CD4-positive, alpha-beta memory T cell (primary cell): ENCODE measurements at regions of chr5 and their contacts with region 1.

Region 1: DNA sequence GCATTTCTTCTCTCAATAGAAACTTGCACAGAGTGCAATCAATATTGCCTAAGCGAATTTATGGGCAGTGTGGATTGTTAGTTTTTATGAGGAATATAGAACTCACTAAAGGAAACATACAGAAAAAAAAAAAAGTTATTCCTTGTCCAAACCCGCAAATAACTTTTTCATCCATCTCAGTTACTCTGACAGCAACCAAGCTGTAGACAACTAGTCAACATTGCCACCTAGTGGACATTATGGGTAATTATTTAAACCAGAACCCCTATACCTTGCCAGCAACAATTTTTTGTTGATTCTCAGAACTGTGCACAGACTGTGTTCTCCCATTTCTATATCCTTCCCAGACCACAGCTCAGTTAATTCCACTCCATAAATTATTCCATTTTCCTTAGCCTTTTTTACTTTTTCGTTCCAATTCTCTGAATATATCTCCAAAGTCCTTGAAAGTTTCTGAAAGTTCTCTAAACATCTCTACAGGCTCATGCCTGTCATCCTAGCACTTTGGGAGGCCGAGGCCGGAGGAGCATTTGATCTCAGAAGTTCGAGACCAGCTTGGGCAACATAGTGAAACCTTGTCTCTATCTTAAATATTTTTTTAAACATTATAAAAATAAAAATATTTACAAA is 2.6 kb upstream of the AFAP1L1 start:
- DNase-seq: peak in 4 of 5 donors; percentile 42 to 62 (median 59)
- H3K4me3 ChIP-seq: no peak overlapping the region
- H3K4me3 Mint-ChIP-seq: peak overlapping the region in 1 of 8 donors; percentile 33
- H3K27ac ChIP-seq: no peak overlapping the region
- H3K27ac Mint-ChIP-seq: peak overlapping the region in 1 of 7 donors; percentile 69
- H3K4me1 ChIP-seq: peaks cover 4% of the 10 kb centered on the region
- H3K4me1 Mint-ChIP-seq: peaks cover 8 to 15% (median 11%) of the 10 kb centered on the region in 4 donors
- H3K27me3 ChIP-seq: peaks cover 22% of the 10 kb centered on the region
- H3K27me3 Mint-ChIP-seq: peaks cover 24 to 28% of the 10 kb centered on the region in 2 donors

Region 2: DNA sequence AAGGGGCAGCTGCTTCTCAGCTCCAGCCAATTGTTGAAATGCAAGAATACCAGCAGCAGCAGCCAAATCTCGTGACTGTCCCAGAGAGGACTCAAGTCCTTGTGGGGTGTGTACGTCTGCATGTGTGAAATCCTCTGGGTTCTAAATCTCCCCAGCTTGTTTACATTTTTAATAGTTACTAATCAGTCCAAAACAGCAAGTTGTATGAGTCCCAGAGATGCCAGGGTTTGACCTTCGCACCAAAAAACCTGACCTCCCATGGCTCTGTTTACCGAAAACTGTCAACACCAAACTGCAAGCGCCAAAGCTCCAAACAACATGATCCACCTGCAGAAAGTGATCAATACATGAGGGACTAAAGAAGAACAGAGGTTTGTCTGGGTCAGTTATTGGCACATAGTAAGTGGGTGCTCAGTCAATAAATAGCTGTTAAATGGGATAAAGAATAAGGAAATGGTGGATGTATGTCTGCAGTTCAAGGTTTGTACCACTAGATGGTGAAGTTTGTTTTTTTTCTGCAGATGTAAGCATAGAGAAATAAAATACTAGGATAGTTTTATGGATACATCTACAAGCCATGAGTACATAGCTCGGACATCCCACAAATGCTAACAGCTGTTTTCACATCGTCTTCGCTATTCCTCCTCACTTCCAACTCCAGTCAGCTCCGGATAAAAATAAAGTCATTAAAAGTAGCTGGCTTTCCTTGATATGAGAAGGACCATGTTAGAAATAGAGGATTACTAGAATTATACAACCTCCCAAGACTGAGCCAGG is 527.9 kb before region 1 on chr5:
- CTCF ChIA-PET with region 1: interaction called, 19 read pairs
- POLR2A ChIA-PET with region 1: no interaction called
- intact Hi-C with region 1: no loop called
- DNase-seq: peak in 4 of 5 donors; percentile 28 to 35 (median 32)
- H3K4me3 ChIP-seq: no peak overlapping the region
- H3K4me3 Mint-ChIP-seq: no peak overlapping the region
- H3K27ac ChIP-seq: no peak overlapping the region
- H3K27ac Mint-ChIP-seq: no peak overlapping the region
- H3K4me1 ChIP-seq: no peaks in the 10 kb centered on the region
- H3K4me1 Mint-ChIP-seq: no peaks in the 10 kb centered on the region
- H3K27me3 ChIP-seq: no peaks in the 10 kb centered on the region
- H3K27me3 Mint-ChIP-seq: peaks cover 4 to 15% of the 10 kb centered on the region in 2 donors

Region 3: GRCh38 chr5:149135536-149136201 is 133.4 kb before region 1 on chr5:
- CTCF ChIA-PET with region 1: interaction called, 190 read pairs
- POLR2A ChIA-PET with region 1: no interaction called
- intact Hi-C with region 1: no loop called
- DNase-seq: no peak
- H3K4me3 ChIP-seq: no peak overlapping the region
- H3K4me3 Mint-ChIP-seq: no peak overlapping the region
- H3K27ac ChIP-seq: no peak overlapping the region
- H3K27ac Mint-ChIP-seq: no peak overlapping the region
- H3K4me1 ChIP-seq: no peaks in the 10 kb centered on the region
- H3K4me1 Mint-ChIP-seq: peaks cover 0 to under 1% (median 0%) of the 10 kb centered on the region in 4 donors
- H3K27me3 ChIP-seq: no peaks in the 10 kb centered on the region
- H3K27me3 Mint-ChIP-seq: peaks cover 21 to 27% of the 10 kb centered on the region in 2 donors

Region 4: DNA sequence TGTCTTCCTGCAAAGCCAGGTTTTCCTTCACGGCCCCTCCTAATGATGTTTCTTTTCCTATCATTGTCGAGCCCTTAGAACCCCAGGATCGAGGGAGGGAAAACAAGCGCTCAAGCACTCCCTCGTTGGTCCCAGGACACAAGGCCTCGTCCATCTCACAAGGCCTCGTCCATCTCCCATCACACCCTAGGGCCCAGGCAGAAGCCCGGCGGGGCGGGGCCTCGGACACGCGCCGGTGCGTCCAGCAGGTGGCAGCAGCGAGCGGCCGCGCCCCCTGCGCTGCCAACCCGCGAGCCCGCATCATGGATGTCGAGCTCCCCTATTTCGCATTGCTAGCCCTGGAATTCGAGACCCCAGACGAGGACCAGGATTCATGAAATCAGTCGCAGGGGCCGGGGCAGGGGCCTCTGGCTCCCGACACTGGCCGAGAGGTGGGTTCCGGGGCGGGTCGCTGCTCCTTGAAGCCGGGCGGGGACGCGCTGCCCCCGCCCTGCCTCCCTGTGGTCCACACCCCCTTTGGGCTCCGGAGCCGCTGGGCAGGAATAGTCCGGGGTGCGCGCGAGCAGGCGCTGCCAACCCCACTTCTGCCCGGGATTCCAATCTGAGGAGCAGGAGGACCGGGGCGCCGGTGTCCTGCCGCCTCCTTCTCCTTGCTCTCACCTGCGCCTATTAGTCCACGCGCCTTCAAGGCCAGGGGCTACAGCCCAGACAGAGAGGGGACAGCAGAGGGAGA is 127.7 kb before region 1 on chr5 and contains the start of gene ABLIM3:
- CTCF ChIA-PET with region 1: interaction called, 190 read pairs
- POLR2A ChIA-PET with region 1: interaction called, 7 read pairs
- intact Hi-C with region 1: loop called (anchors 1 kb)
- DNase-seq: peak; percentile 58 to 79 (median 68)
- H3K4me3 ChIP-seq: peak within 1 kb of the TSS in 1 of 2 donors; percentile 58
- H3K4me3 Mint-ChIP-seq: peak within 1 kb of the TSS; percentile 33 to 76 (median 56)
- H3K27ac ChIP-seq: no peak within 1 kb of the TSS
- H3K27ac Mint-ChIP-seq: peak within 1 kb of the TSS in 1 of 7 donors; percentile 36
- H3K4me1 ChIP-seq: peaks cover 10% of the 10 kb centered on the region
- H3K4me1 Mint-ChIP-seq: peaks cover 0 to 5% (median under 1%) of the 10 kb centered on the region in 4 donors
- H3K27me3 ChIP-seq: no peaks in the 10 kb centered on the region
- H3K27me3 Mint-ChIP-seq: peaks cover 4 to 18% of the 10 kb centered on the region in 2 donors
- total RNA-seq, gene ABLIM3: not detected

Region 5: DNA sequence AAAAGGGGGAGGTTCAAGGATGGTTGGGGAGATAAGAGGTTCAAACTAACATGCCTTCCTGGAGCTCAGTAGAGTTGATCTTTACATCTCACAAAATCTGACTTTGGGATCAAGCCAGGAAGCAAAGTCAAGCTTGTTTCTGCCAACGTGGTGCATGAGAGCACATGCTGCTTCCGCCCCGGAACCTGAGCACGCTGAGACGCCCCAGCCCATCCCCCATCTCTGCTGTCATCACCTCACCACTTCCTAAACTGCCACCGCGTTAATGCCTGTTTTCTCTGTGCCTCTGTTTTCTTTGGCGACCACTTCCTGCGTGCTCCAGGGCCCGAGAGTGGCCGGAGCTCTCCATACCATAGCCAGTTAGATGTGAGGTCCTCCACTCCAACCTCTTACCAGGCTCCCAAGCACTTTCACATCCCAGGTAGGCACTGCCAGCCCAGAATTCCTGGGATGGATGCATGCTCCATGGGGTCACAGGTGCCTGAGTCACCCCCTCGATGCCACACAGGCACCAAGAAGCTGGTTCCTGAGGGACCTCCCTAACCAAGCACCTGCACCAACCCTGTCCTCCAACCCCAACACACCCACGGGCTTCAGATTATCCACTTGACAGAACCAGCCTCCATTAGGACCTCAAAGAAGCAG is 28.6 kb before region 1 on chr5:
- CTCF ChIA-PET with region 1: interaction called, 21 read pairs
- POLR2A ChIA-PET with region 1: interaction called, 4 read pairs
- intact Hi-C with region 1: loop called (anchors 1 kb)
- DNase-seq: peak; percentile 78 to 91 (median 88)
- H3K4me3 ChIP-seq: peak overlapping the region; percentile 26 to 34
- H3K4me3 Mint-ChIP-seq: peak overlapping the region; percentile 25 to 80 (median 64)
- H3K27ac ChIP-seq: peak overlapping the region; percentile 49
- H3K27ac Mint-ChIP-seq: peak overlapping the region; percentile 81 to 95 (median 89)
- H3K4me1 ChIP-seq: peaks cover 35% of the 10 kb centered on the region
- H3K4me1 Mint-ChIP-seq: peaks cover 29 to 57% (median 37%) of the 10 kb centered on the region in 4 donors
- H3K27me3 ChIP-seq: no peaks in the 10 kb centered on the region
- H3K27me3 Mint-ChIP-seq: no peaks in the 10 kb centered on the region

Region 6: DNA sequence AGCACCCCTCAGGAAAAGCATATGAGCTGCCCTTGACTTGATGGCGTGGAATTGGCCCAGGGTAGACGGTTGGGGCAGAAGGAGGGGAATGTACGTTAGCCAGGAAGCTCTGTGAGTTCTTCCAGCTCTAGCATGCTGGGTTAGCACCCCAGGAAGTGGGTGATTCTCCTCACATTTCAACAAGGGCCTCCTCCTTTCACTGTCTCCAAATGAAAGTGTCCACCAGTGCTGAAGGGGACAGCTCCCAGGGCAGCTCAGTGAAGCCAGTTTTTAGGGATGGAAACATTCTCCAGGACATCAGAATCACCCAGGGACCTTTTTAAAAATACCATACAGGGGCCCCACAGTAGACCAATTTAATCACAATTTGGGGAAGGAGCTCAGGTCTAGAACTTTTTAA is 14.5 kb before region 1 on chr5:
- CTCF ChIA-PET with region 1: interaction called, 14 read pairs
- POLR2A ChIA-PET with region 1: no interaction called
- intact Hi-C with region 1: no loop called
- DNase-seq: no peak
- H3K4me3 ChIP-seq: no peak overlapping the region
- H3K4me3 Mint-ChIP-seq: no peak overlapping the region
- H3K27ac ChIP-seq: no peak overlapping the region
- H3K27ac Mint-ChIP-seq: no peak overlapping the region
- H3K4me1 ChIP-seq: no peaks in the 10 kb centered on the region
- H3K4me1 Mint-ChIP-seq: peaks cover 0 to 3% (median under 1%) of the 10 kb centered on the region in 4 donors
- H3K27me3 ChIP-seq: no peaks in the 10 kb centered on the region
- H3K27me3 Mint-ChIP-seq: peaks cover 1 to 4% of the 10 kb centered on the region in 2 donors

Region 7: GRCh38 chr5:149392718-149393117 is 123.7 kb after region 1 on chr5:
- CTCF ChIA-PET with region 1: no interaction called
- POLR2A ChIA-PET with region 1: no interaction called
- intact Hi-C with region 1: no loop called
- DNase-seq: no peak
- H3K4me3 ChIP-seq: no peak overlapping the region
- H3K4me3 Mint-ChIP-seq: no peak overlapping the region
- H3K27ac ChIP-seq: no peak overlapping the region
- H3K27ac Mint-ChIP-seq: no peak overlapping the region
- H3K4me1 ChIP-seq: no peaks in the 10 kb centered on the region
- H3K4me1 Mint-ChIP-seq: no peaks in the 10 kb centered on the region
- H3K27me3 ChIP-seq: no peaks in the 10 kb centered on the region
- H3K27me3 Mint-ChIP-seq: no peaks in the 10 kb centered on the region

Region 8: DNA sequence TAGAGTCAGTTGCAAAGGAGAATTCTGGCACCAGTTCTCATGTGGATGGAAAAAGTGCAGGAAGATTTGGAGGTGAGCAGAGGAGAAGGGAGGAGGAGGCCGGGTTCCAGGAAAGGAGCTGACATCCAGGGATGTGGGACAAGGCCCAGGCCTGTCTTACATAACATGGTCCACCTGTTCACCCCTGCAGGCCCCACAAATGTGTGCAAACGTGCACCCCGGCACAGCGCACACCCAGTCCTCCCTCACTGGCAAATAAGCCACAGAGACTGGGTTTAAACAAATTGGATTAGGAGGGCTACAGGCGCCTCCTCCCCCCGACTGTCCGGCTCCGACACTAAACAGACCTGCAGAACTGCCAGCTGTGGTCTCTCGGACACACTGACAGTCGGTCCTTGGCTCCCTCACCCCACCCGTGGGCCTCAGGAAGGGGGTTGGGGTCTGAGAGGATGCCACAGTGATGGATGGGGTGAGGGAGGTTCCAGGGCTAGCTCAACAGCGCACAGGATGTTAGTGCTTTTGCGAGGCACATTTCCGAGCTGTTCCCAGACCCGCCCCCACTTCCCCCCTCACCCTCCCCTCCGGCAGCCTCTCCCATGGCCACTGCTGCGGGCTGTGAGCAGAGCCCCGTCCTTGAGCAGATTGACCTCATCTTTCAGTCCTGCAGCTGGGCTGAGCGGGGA is 153.5 kb after region 1 on chr5:
- CTCF ChIA-PET with region 1: no interaction called
- POLR2A ChIA-PET with region 1: no interaction called
- intact Hi-C with region 1: no loop called
- DNase-seq: no peak
- H3K4me3 ChIP-seq: no peak overlapping the region
- H3K4me3 Mint-ChIP-seq: no peak overlapping the region
- H3K27ac ChIP-seq: no peak overlapping the region
- H3K27ac Mint-ChIP-seq: peak overlapping the region in 1 of 7 donors; percentile 9
- H3K4me1 ChIP-seq: no peaks in the 10 kb centered on the region
- H3K4me1 Mint-ChIP-seq: peaks cover 0 to 4% (median under 1%) of the 10 kb centered on the region in 4 donors
- H3K27me3 ChIP-seq: no peaks in the 10 kb centered on the region
- H3K27me3 Mint-ChIP-seq: peaks cover 2 to 11% of the 10 kb centered on the region in 2 donors

Region 9: DNA sequence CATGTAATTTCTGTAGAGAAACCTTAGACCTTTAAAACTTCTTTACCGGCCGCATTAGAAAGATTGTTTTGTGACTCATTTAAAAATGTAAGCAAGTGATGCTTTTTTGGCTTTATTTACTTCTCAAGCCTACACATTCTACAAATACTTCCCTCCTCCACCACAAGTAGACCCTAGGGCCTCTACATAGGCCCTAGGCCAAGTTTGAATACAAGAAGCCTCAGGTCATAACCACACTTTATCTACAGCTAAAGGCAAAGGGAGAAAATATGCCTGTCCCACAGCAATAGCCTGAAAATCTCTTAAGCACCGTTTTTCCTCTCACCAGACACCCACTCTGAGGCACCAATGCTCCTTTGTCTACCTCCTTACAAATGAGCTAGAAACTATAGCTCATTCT is 228.3 kb after region 1 on chr5:
- CTCF ChIA-PET with region 1: no interaction called
- POLR2A ChIA-PET with region 1: no interaction called
- intact Hi-C with region 1: no loop called
- DNase-seq: no peak
- H3K4me3 ChIP-seq: no peak overlapping the region
- H3K4me3 Mint-ChIP-seq: no peak overlapping the region
- H3K27ac ChIP-seq: no peak overlapping the region
- H3K27ac Mint-ChIP-seq: peak overlapping the region in 6 of 7 donors; percentile 11 to 85 (median 52)
- H3K4me1 ChIP-seq: no peaks in the 10 kb centered on the region
- H3K4me1 Mint-ChIP-seq: peaks cover 0 to 3% (median 0%) of the 10 kb centered on the region in 4 donors
- H3K27me3 ChIP-seq: no peaks in the 10 kb centered on the region
- H3K27me3 Mint-ChIP-seq: no peaks in the 10 kb centered on the region